ENCODE measurements at regions of chr11 and their contacts with region 1.

Region 1: GRCh38 chr11:13152736-13153533 is 124.7 kb upstream of the BMAL1 start:
- DNase-seq: peak in 1 of 3 donors; percentile 61
- ATAC-seq: peak; percentile 52
- H3K4me3 ChIP-seq: no peak overlapping the region
- H3K4me1 ChIP-seq: no peaks in the 10 kb centered on the region
- CTCF ChIP-seq: no peak

Region 2: GRCh38 chr11:12963792-12964536 is 189.0 kb before region 1 on chr11:
- intact Hi-C with region 1: loop called in 1 of 2 experiments (anchors 5 kb)
- DNase-seq: peak; percentile 53 to 84 (median 78)
- ATAC-seq: peak; percentile 87
- H3K4me3 ChIP-seq: no peak overlapping the region
- H3K4me1 ChIP-seq: no peaks in the 10 kb centered on the region
- CTCF ChIP-seq: peak; percentile 79

Region 3: GRCh38 chr11:13098063-13098462 is 54.9 kb before region 1 on chr11:
- intact Hi-C with region 1: no loop called
- DNase-seq: no peak
- ATAC-seq: peak; percentile 42
- H3K4me3 ChIP-seq: no peak overlapping the region
- H3K4me1 ChIP-seq: peaks cover 5% of the 10 kb centered on the region
- CTCF ChIP-seq: no peak

Measured in mucosa of descending colon (tissue), 3 donors.